AG04450 (cell line): ENCODE measurements at regions of chr3 and their contacts with region 1.

Region 1: DNA sequence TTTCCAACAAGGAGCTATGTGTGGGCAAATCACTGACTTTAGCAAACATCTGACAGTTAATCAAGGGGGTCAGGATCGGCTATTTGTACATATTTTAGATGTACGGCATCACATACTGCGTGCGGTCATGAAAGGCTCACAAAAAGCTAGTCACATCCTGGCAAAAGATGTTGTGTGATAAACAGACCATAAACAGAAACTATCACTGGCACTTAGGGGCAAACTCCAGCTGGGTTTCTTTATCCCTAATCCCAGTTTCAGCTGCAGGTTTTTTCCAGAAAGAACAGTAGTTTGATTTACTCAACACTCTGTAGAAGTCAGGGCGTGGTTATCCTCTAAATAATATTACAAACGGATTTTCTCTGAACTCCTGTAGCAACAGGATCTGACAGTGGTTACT is 112.4 kb upstream of the BHLHE40 start:
- DNase-seq: no peak
- H3K4me3 ChIP-seq: no peak overlapping the region
- H3K27ac ChIP-seq: no peak overlapping the region
- H3K27me3 ChIP-seq: no peaks in the 10 kb centered on the region
- CTCF ChIP-seq: no peak

Region 2: GRCh38 chr3:4836516-4836915 is 30.3 kb before region 1 on chr3:
- CTCF ChIA-PET with region 1: interaction called, 14 read pairs
- POLR2A ChIA-PET with region 1: no interaction called
- DNase-seq: no peak
- H3K4me3 ChIP-seq: no peak overlapping the region
- H3K27ac ChIP-seq: no peak overlapping the region
- H3K27me3 ChIP-seq: no peaks in the 10 kb centered on the region
- CTCF ChIP-seq: no peak

Region 3: GRCh38 chr3:4888913-4889846 is 22.3 kb after region 1 on chr3:
- CTCF ChIA-PET with region 1: no interaction called
- POLR2A ChIA-PET with region 1: no interaction called
- DNase-seq: no peak
- H3K4me3 ChIP-seq: no peak overlapping the region
- H3K27ac ChIP-seq: no peak overlapping the region
- H3K27me3 ChIP-seq: no peaks in the 10 kb centered on the region
- CTCF ChIP-seq: no peak